ENCODE measurements at regions of chr12 and their contacts with region 1.

Region 1: DNA sequence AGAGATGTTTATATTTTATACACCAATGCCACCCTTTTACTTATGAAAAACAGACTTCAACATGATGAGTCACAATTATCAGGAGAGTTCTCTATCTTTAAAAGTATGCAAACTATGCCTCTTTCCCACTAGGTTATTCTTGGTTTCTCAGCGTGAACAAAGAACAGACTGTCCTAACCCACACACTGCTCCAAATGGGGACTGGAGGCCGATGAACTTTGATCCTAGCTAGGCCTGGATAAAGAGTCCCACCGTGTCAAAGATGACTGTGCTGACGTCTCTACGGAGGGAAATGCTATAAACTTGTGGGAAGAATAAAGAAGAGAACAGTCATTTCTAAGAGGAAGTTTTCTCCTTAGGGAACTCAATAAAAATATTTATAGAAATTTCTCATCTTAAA is 160.1 kb downstream of the EPS8 start:
- DNase-seq: no peak
- ATAC-seq: peak; percentile 98

Region 2: GRCh38 chr12:15044471-15044870 is 584.6 kb before region 1 on chr12:
- intact Hi-C with region 1: no loop called
- DNase-seq: no peak
- ATAC-seq: no peak

Region 3: GRCh38 chr12:15597125-15597830 is 31.8 kb before region 1 on chr12:
- intact Hi-C with region 1: loop called (anchors 2 kb)
- DNase-seq: no peak
- ATAC-seq: no peak

Region 4: GRCh38 chr12:15789220-15790171 is 160.4 kb after region 1 on chr12 and contains the start of gene EPS8:
- intact Hi-C with region 1: loop called (anchors 5 kb)
- DNase-seq: peak; percentile 94
- ATAC-seq: peak; percentile 98
- total RNA-seq, gene EPS8: 20.7 TPM

Measured in Right ventricle myocardium inferior (tissue), 1 donor.